ENCODE measurements at regions of chr3 and their contacts with region 1.

Region 1: GRCh38 chr3:196073188-196073838 is 8.6 kb downstream of the TFRC start:
- DNase-seq: peak; percentile 56 to 89 (median 64)
- ATAC-seq: peak; percentile 99
- H3K4me3 ChIP-seq: no peak overlapping the region
- H3K4me3 Mint-ChIP-seq: no peak overlapping the region
- H3K27ac ChIP-seq: no peak overlapping the region
- H3K27ac Mint-ChIP-seq: peak overlapping the region; percentile 25
- H3K4me1 ChIP-seq: peaks cover 14% of the 10 kb centered on the region
- H3K4me1 Mint-ChIP-seq: peaks cover 32% of the 10 kb centered on the region
- H3K27me3 ChIP-seq: no peaks in the 10 kb centered on the region
- H3K27me3 Mint-ChIP-seq: no peaks in the 10 kb centered on the region
- CTCF ChIP-seq: peak; percentile 80

Region 2: DNA sequence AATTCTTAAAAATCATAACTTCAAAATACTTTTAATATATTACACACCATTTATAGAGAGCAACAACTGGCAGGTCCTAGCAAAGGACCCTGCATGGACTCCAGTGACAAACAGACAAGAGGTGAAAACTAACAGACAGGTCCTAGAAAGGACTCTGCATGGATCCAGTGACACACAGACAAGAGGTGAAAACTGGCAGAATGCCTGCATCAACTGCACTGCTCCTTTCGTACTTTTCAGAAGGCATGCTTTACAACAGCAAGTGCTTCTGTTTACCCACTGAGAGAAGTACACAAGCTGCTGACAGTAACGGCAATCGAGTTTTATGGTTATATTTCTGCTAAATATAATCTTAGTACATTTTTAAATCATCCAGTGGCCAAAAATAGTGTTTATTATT is 1650.0 kb before region 1 on chr3:
- CTCF ChIA-PET with region 1: no interaction called
- POLR2A ChIA-PET with region 1: no interaction called
- intact Hi-C with region 1: no loop called
- DNase-seq: no peak
- ATAC-seq: no peak
- H3K4me3 ChIP-seq: no peak overlapping the region
- H3K4me3 Mint-ChIP-seq: no peak overlapping the region
- H3K27ac ChIP-seq: no peak overlapping the region
- H3K27ac Mint-ChIP-seq: no peak overlapping the region
- H3K4me1 ChIP-seq: no peaks in the 10 kb centered on the region
- H3K4me1 Mint-ChIP-seq: no peaks in the 10 kb centered on the region
- H3K27me3 ChIP-seq: no peaks in the 10 kb centered on the region
- H3K27me3 Mint-ChIP-seq: no peaks in the 10 kb centered on the region
- CTCF ChIP-seq: no peak

Region 3: GRCh38 chr3:195154793-195155535 is 918.3 kb before region 1 on chr3:
- CTCF ChIA-PET with region 1: no interaction called
- POLR2A ChIA-PET with region 1: no interaction called
- intact Hi-C with region 1: no loop called
- DNase-seq: peak in 2 of 14 experiments; percentile 17 to 33
- ATAC-seq: no peak
- H3K4me3 ChIP-seq: no peak overlapping the region
- H3K4me3 Mint-ChIP-seq: no peak overlapping the region
- H3K27ac ChIP-seq: no peak overlapping the region
- H3K27ac Mint-ChIP-seq: no peak overlapping the region
- H3K4me1 ChIP-seq: peaks cover 24% of the 10 kb centered on the region
- H3K4me1 Mint-ChIP-seq: peaks cover 34% of the 10 kb centered on the region
- H3K27me3 ChIP-seq: no peaks in the 10 kb centered on the region
- H3K27me3 Mint-ChIP-seq: peaks cover 4% of the 10 kb centered on the region
- CTCF ChIP-seq: no peak

Region 4: GRCh38 chr3:196096382-196096953 is 23.2 kb after region 1 on chr3:
- CTCF ChIA-PET with region 1: interaction called, 11 read pairs
- POLR2A ChIA-PET with region 1: interaction called, 3 read pairs
- intact Hi-C with region 1: no loop called
- DNase-seq: no peak
- ATAC-seq: no peak
- H3K4me3 ChIP-seq: no peak overlapping the region
- H3K4me3 Mint-ChIP-seq: no peak overlapping the region
- H3K27ac ChIP-seq: no peak overlapping the region
- H3K27ac Mint-ChIP-seq: no peak overlapping the region
- H3K4me1 ChIP-seq: peaks cover 9% of the 10 kb centered on the region
- H3K4me1 Mint-ChIP-seq: peaks cover 10% of the 10 kb centered on the region
- H3K27me3 ChIP-seq: no peaks in the 10 kb centered on the region
- H3K27me3 Mint-ChIP-seq: no peaks in the 10 kb centered on the region
- CTCF ChIP-seq: no peak

Region 5: DNA sequence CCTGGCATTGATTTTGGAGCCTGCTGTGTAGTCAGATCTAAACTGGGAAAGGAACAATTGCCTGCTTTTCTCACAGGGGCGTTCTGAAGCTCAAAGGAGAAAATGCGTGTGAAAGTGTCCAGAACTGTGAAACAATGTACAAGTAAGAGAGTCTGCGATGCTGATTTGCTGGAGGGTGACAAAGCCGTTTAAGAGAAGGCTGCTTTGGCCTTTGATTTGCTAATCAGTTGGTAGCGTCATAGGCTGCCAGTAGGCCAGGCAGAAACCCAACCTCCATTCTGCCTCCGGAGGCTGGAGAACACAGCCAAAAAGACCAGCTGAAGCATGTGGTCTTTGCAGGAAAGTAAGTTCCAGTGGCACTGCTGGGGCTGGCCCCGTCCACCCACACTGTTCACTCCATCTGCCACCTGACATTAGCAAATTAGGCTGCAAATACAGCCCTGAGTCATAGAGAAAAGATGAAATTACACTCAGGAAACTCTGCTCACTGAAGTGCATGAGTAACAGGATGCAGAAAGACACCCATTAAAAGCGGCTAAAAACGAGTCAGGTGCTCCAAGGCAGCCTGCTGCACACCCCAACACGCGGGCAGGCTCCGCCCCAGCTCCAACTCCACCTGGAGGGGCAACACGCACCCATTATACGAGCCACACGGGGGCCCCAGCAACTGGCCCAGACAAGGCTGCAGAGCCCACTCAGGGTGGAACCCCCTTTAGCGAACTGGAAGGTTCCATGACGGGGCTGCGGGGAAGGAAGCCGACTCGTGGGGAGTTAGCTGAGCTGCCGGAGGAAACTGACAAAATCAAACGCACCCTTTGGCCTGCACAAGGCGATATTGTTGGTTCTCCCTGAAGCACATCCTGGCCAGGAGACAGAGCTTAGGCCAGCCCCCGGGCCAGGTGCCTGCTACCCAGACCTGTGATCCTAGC is 106.3 kb after region 1 on chr3:
- CTCF ChIA-PET with region 1: interaction called, 13 read pairs
- POLR2A ChIA-PET with region 1: interaction called, 15 read pairs
- intact Hi-C with region 1: no loop called
- DNase-seq: peak; percentile 49 to 92 (median 78)
- ATAC-seq: peak; percentile 88
- H3K4me3 ChIP-seq: peak overlapping the region; percentile 42
- H3K4me3 Mint-ChIP-seq: peak overlapping the region; percentile 77
- H3K27ac ChIP-seq: peak overlapping the region; percentile 74 to 87
- H3K27ac Mint-ChIP-seq: peak overlapping the region; percentile 96
- H3K4me1 ChIP-seq: peaks cover 61% of the 10 kb centered on the region
- H3K4me1 Mint-ChIP-seq: peaks cover 40% of the 10 kb centered on the region
- H3K27me3 ChIP-seq: no peaks in the 10 kb centered on the region
- H3K27me3 Mint-ChIP-seq: no peaks in the 10 kb centered on the region
- CTCF ChIP-seq: no peak

Region 6: GRCh38 chr3:196192036-196192523 is 118.8 kb after region 1 on chr3:
- CTCF ChIA-PET with region 1: interaction called, 28 read pairs
- POLR2A ChIA-PET with region 1: interaction called, 18 read pairs
- intact Hi-C with region 1: loop called (anchors 1 kb)
- DNase-seq: peak in 12 of 14 experiments; percentile 8 to 87 (median 32)
- ATAC-seq: peak; percentile 50
- H3K4me3 ChIP-seq: no peak overlapping the region
- H3K4me3 Mint-ChIP-seq: peak overlapping the region; percentile 51
- H3K27ac ChIP-seq: peak overlapping the region; percentile 61 to 85
- H3K27ac Mint-ChIP-seq: peak overlapping the region; percentile 90
- H3K4me1 ChIP-seq: peaks cover 54% of the 10 kb centered on the region
- H3K4me1 Mint-ChIP-seq: peaks cover 19% of the 10 kb centered on the region
- H3K27me3 ChIP-seq: no peaks in the 10 kb centered on the region
- H3K27me3 Mint-ChIP-seq: no peaks in the 10 kb centered on the region
- CTCF ChIP-seq: no peak

Region 7: DNA sequence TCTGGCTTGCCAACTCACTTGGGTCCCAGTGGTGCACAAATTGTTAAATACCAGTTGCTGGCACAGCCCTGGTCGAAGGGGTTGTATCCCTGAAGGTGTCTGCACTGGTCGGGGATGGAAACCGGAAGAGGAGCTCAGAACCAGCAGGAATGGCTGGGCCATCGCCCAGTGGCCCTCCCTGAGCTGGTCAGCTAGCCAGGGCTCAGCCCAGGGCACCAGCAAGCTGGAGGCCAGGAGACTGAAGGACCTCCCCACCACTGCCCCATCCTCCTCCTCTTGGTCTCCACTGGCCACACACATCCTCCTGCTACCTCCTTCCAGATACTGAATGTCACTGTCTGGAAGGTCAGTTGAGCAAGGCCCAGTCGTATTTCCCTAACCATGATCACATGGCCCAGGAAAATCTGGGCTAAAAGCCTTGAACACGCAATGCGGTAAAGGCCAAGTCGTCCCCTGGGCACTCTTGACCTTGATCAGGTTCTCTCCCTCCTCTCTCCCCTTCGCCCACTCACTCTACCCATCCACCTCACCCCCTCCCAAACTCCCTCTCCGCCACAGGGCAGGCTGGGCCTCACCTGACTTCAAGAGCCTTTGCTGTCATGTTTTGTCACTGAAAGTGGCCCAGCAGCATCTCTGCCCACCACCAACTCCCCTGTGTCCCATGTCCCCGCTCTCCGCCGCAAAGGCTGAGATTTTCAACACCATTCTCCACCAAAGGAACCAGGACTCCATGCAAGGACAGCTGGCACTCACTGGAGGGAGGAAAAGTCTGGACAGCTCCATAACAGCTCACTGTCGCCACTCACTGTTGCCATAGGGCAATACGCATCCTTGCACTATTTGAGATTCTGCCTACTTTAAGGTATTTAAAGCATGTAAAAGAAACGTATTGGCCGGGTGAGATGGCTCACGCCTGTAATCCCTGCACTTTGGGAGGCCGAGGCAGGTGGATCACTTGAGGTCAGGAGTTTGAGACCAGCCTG is 125.7 kb after region 1 on chr3:
- CTCF ChIA-PET with region 1: interaction called, 28 read pairs
- POLR2A ChIA-PET with region 1: interaction called, 18 read pairs
- intact Hi-C with region 1: loop called (anchors 1 kb)
- DNase-seq: no peak
- ATAC-seq: no peak
- H3K4me3 ChIP-seq: no peak overlapping the region
- H3K4me3 Mint-ChIP-seq: no peak overlapping the region
- H3K27ac ChIP-seq: no peak overlapping the region
- H3K27ac Mint-ChIP-seq: no peak overlapping the region
- H3K4me1 ChIP-seq: peaks cover 21% of the 10 kb centered on the region
- H3K4me1 Mint-ChIP-seq: no peaks in the 10 kb centered on the region
- H3K27me3 ChIP-seq: no peaks in the 10 kb centered on the region
- H3K27me3 Mint-ChIP-seq: no peaks in the 10 kb centered on the region
- CTCF ChIP-seq: no peak

Region 8: DNA sequence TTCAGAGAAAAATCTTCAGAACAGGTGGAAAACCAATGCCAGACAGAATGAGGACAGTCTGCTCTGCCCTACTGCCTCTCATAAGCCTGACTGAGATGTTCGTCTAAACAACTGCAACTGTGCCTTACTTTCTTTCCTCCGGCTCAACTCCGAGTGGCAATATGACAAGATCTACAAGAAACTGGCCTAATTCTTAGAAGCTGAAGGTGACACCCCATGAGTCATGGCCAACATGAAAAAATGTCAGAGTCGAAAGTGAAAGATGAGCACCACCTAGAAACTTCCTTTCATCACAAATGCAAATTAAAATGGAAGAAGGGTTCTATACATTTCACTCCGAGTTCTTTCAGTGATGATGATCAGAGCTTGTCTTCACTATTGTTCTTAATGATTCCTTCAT is 201.3 kb after region 1 on chr3:
- CTCF ChIA-PET with region 1: no interaction called
- POLR2A ChIA-PET with region 1: no interaction called
- intact Hi-C with region 1: no loop called
- DNase-seq: peak; percentile 10 to 91 (median 44)
- ATAC-seq: peak; percentile 91
- H3K4me3 ChIP-seq: peak overlapping the region; percentile 31
- H3K4me3 Mint-ChIP-seq: peak overlapping the region; percentile 61
- H3K27ac ChIP-seq: peak overlapping the region; percentile 51 to 76
- H3K27ac Mint-ChIP-seq: peak overlapping the region; percentile 91
- H3K4me1 ChIP-seq: peaks cover 41% of the 10 kb centered on the region
- H3K4me1 Mint-ChIP-seq: peaks cover 25% of the 10 kb centered on the region
- H3K27me3 ChIP-seq: no peaks in the 10 kb centered on the region
- H3K27me3 Mint-ChIP-seq: no peaks in the 10 kb centered on the region
- CTCF ChIP-seq: no peak

Region 9: DNA sequence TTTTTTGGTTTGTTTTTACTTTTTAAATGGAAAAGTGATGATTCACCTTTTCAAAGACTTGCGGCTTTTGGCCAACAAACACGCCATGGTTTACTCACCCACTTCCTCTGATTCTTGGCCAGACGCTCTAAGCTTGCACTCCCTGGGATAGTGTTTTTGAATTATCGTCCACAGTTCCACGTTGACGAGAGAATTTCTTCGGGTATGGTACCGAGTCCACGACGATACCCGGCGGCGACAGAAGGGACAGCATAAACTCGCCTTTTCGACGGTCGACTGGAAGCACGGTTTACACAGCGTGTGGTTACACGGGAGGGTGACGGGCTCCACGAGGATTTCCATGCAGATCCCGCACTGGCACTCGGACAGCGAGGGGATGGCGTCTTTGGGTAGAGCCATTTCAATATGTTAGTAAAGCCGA is 429.5 kb after region 1 on chr3:
- CTCF ChIA-PET with region 1: no interaction called
- POLR2A ChIA-PET with region 1: no interaction called
- intact Hi-C with region 1: loop called in 1 of 2 experiments (anchors 10 kb)
- DNase-seq: peak; percentile 36 to 88 (median 51)
- ATAC-seq: peak; percentile 62
- H3K4me3 ChIP-seq: peak overlapping the region; percentile 100
- H3K4me3 Mint-ChIP-seq: peak overlapping the region; percentile 99
- H3K27ac ChIP-seq: peak overlapping the region; percentile 85 to 86
- H3K27ac Mint-ChIP-seq: peak overlapping the region; percentile 96
- H3K4me1 ChIP-seq: peaks cover 29% of the 10 kb centered on the region
- H3K4me1 Mint-ChIP-seq: peaks cover 45% of the 10 kb centered on the region
- H3K27me3 ChIP-seq: no peaks in the 10 kb centered on the region
- H3K27me3 Mint-ChIP-seq: no peaks in the 10 kb centered on the region
- CTCF ChIP-seq: no peak

Measured in CD4-positive, alpha-beta T cell (primary cell).